Testis (tissue), 5 donors: ENCODE measurements at regions of chr12 and their contacts with region 1.

Region 1: GRCh38 chr12:2930865-2931264 is 28.3 kb upstream of the TEAD4 start:
- DNase-seq: no peak
- H3K4me3 ChIP-seq: no peak overlapping the region
- H3K27ac ChIP-seq: no peak overlapping the region
- H3K4me1 ChIP-seq: no peaks in the 10 kb centered on the region
- H3K27me3 ChIP-seq: no peaks in the 10 kb centered on the region
- CTCF ChIP-seq: no peak
- POLR2A ChIP-seq: no peak

Region 2: DNA sequence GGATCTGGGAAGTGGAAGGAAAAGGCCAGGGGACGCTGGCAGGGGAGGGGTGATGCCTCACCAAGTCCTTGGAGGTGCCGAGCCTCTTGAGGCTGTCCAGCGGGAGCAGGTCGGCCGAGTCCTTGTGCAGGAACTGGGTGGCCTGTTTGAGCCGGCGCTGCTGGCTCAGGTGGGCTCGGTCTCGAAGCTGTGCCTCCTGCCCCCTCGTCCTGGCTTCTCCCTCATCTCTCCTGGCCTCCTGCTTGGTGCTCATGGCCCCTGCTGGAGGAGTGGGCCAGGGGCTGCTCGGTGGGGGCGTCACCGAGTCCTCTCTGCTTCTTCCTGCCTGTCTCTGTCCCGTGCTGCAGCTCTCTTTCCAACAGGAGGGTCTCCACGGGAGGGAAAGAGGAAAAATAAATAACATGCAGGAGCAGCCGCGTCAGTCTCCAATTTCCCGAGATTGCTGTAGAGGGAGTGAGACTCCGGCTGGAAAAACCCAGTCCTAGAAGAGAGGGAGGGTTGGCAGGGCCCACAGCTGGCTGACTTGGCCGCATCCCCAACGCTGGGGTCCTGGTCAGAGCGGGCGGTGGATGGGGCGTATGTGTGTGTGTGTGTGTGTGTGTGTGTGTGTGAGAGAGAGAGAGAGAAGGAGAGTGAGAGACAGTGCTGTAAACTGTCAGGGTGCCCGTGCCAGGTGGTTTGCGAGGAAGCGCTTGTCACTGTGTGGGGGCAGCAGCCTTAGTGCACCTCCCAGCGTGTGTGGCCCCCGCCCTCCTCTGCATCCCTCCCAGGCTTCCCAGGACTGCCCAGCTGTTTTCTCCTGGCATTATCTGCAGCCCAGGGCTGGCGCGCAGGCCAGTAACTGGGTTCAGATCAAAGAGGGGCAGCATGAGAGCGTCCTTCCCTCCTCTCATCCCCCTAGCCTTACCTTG is 96.0 kb before region 1 on chr12 and contains the start of gene NRIP2:
- intact Hi-C with region 1: loop called (anchors 10 kb)
- DNase-seq: peak; percentile 42
- H3K4me3 ChIP-seq: peak within 1 kb of the TSS in 1 of 2 donors; percentile 36
- H3K27ac ChIP-seq: peak within 1 kb of the TSS in 1 of 2 donors; percentile 25
- H3K4me1 ChIP-seq: peaks cover 9% of the 10 kb centered on the region
- H3K27me3 ChIP-seq: no peaks in the 10 kb centered on the region
- CTCF ChIP-seq: no peak
- POLR2A ChIP-seq: no peak
- total RNA-seq, gene NRIP2: 2.6 to 10.6 TPM

Region 3: GRCh38 chr12:3355378-3355900 is 424.6 kb after region 1 on chr12:
- intact Hi-C with region 1: no loop called
- DNase-seq: no peak
- H3K4me3 ChIP-seq: no peak overlapping the region
- H3K27ac ChIP-seq: no peak overlapping the region
- H3K4me1 ChIP-seq: no peaks in the 10 kb centered on the region
- H3K27me3 ChIP-seq: no peaks in the 10 kb centered on the region
- CTCF ChIP-seq: no peak
- POLR2A ChIP-seq: no peak